Activated CD8-positive, alpha-beta T cell treated with anti-CD3 and anti-CD28 coated beads for 36 hours (primary cell): ENCODE measurements at regions of chr3 and their contacts with region 1.

Region 1: DNA sequence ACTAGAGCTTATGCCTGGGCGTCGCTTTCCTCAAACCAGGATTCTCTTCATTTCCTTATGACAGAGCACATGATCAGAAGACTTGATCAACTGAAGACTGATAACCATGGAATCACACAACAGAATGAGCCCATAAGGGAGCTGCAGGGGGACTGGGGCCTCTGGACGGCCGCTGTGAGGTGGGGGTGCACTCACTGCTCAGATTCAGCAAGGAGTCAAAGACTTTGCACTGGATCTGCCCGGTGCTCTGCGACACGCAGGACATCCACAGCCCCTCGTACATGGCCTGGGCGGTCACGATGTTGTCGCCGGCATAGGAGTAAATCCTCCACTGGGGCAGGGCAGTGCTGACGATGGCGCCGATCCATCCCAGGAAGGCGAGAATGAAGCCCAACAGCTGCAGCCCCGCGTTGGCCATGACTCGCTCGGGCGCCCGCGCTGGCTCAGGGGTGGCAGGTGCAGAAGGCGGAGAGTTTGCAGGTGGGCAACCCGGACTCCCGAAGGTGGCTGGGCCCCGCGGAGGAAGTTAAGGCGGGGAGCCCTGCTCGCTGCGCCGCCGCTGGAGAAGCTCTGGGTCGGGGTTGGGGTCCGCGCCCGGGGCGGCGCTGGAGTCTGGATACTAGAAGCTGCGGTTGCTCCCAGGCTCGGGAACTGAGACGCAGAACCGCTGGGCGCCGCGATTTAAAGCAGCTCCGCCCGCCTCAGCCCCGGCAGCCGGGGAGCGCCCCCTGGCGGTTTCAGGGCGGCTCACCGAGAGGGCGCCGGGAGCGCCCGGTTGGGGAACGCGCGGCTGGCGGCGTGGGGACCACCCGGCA is at the start of gene CLDN1:
- DNase-seq: peak; percentile 78
- ATAC-seq: peak; percentile 82
- H3K4me3 Mint-ChIP-seq: peak within 1 kb of the TSS; percentile 66
- H3K27ac Mint-ChIP-seq: no peak within 1 kb of the TSS
- H3K4me1 Mint-ChIP-seq: peaks cover 28% of the 10 kb centered on the region
- H3K27me3 Mint-ChIP-seq: peaks cover 33% of the 10 kb centered on the region
- CTCF ChIP-seq: peak; percentile 94
- total RNA-seq, gene CLDN1: 0.58 to 0.77 TPM

Region 2: GRCh38 chr3:189961525-189962161 is 360.4 kb before region 1 on chr3:
- CTCF ChIA-PET with region 1: interaction called, 14 read pairs
- POLR2A ChIA-PET with region 1: no interaction called
- intact Hi-C with region 1: loop called (anchors 10 kb)
- DNase-seq: peak; percentile 85
- ATAC-seq: peak; percentile 90
- H3K4me3 Mint-ChIP-seq: no peak overlapping the region
- H3K27ac Mint-ChIP-seq: no peak overlapping the region
- H3K4me1 Mint-ChIP-seq: peaks cover 5% of the 10 kb centered on the region
- H3K27me3 Mint-ChIP-seq: peaks cover 12% of the 10 kb centered on the region
- CTCF ChIP-seq: peak; percentile 88

Region 3: GRCh38 chr3:190217081-190217480 is 104.9 kb before region 1 on chr3:
- CTCF ChIA-PET with region 1: interaction called, 22 read pairs
- POLR2A ChIA-PET with region 1: no interaction called
- intact Hi-C with region 1: no loop called
- DNase-seq: no peak
- ATAC-seq: no peak
- H3K4me3 Mint-ChIP-seq: no peak overlapping the region
- H3K27ac Mint-ChIP-seq: no peak overlapping the region
- H3K4me1 Mint-ChIP-seq: no peaks in the 10 kb centered on the region
- H3K27me3 Mint-ChIP-seq: no peaks in the 10 kb centered on the region
- CTCF ChIP-seq: no peak

Region 4: GRCh38 chr3:190281308-190282051 is 40.5 kb before region 1 on chr3:
- CTCF ChIA-PET with region 1: interaction called, 12 read pairs
- POLR2A ChIA-PET with region 1: no interaction called
- intact Hi-C with region 1: no loop called
- DNase-seq: no peak
- ATAC-seq: no peak
- H3K4me3 Mint-ChIP-seq: no peak overlapping the region
- H3K27ac Mint-ChIP-seq: no peak overlapping the region
- H3K4me1 Mint-ChIP-seq: no peaks in the 10 kb centered on the region
- H3K27me3 Mint-ChIP-seq: peaks cover 2% of the 10 kb centered on the region
- CTCF ChIP-seq: no peak

Region 5: GRCh38 chr3:190306513-190307165 is 15.4 kb before region 1 on chr3:
- CTCF ChIA-PET with region 1: interaction called, 20 read pairs
- POLR2A ChIA-PET with region 1: interaction called, 5 read pairs
- intact Hi-C with region 1: no loop called
- DNase-seq: peak; percentile 61
- ATAC-seq: peak; percentile 94
- H3K4me3 Mint-ChIP-seq: peak overlapping the region; percentile 37
- H3K27ac Mint-ChIP-seq: peak overlapping the region; percentile 88
- H3K4me1 Mint-ChIP-seq: peaks cover 30% of the 10 kb centered on the region
- H3K27me3 Mint-ChIP-seq: peaks cover 18% of the 10 kb centered on the region
- CTCF ChIP-seq: no peak